ENCODE measurements at regions of chr17 and their contacts with region 1.

Region 1: GRCh38 chr17:59964482-59965328 is at the start of gene RNFT1:
- DNase-seq: peak; percentile 86
- H3K4me3 Mint-ChIP-seq: peak within 1 kb of the TSS; percentile 84
- H3K27ac Mint-ChIP-seq: peak within 1 kb of the TSS; percentile 94
- H3K4me1 Mint-ChIP-seq: peaks cover 25% of the 10 kb centered on the region
- H3K27me3 Mint-ChIP-seq: peaks cover 12% of the 10 kb centered on the region
- total RNA-seq, gene RNFT1: 32.2 and 35.5 TPM in 2 replicates

Region 2: DNA sequence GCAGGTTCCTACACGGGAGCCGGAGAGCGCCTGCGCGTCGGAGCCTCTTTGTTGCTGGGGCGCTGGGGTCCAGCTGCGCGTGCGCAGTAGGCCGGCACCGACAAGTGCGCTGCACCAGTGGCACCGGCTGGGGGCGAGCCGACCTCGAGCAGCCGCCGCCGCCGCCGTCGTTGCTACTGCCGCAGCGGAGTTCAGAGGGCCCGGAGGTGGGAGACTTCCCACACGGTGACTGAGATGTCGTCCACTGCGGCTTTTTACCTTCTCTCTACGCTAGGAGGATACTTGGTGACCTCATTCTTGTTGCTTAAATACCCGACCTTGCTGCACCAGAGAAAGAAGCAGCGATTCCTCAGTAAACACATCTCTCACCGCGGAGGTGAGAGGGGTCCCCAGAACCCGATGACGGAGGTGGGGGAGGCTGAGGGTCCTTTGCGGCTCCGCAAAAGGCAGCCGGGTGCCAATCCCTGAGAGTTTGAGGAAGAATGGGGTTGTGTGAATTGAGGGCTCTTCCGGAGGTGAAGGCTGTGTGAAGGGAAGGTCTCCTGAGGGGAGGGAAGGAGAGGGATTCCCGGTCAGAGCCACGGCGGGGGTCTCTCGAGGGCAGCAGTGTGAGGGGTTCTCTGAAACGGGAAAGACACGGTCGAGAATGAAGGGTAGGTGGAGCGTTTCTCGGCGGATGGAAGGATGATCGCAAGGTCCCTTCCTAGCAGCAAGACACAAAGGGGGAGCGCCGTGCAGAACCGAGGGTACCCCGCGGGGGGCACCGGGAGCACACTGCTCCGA is 744.1 kb before region 1 on chr17 and contains the start of gene GDPD1:
- intact Hi-C with region 1: loop called (anchors 10 kb)
- DNase-seq: peak; percentile 97
- H3K4me3 Mint-ChIP-seq: peak within 1 kb of the TSS; percentile 95
- H3K27ac Mint-ChIP-seq: peak within 1 kb of the TSS; percentile 93
- H3K4me1 Mint-ChIP-seq: peaks cover 14% of the 10 kb centered on the region
- H3K27me3 Mint-ChIP-seq: peaks cover 6% of the 10 kb centered on the region
- total RNA-seq, gene GDPD1: 2.7 and 3.2 TPM in 2 replicates

Region 3: DNA sequence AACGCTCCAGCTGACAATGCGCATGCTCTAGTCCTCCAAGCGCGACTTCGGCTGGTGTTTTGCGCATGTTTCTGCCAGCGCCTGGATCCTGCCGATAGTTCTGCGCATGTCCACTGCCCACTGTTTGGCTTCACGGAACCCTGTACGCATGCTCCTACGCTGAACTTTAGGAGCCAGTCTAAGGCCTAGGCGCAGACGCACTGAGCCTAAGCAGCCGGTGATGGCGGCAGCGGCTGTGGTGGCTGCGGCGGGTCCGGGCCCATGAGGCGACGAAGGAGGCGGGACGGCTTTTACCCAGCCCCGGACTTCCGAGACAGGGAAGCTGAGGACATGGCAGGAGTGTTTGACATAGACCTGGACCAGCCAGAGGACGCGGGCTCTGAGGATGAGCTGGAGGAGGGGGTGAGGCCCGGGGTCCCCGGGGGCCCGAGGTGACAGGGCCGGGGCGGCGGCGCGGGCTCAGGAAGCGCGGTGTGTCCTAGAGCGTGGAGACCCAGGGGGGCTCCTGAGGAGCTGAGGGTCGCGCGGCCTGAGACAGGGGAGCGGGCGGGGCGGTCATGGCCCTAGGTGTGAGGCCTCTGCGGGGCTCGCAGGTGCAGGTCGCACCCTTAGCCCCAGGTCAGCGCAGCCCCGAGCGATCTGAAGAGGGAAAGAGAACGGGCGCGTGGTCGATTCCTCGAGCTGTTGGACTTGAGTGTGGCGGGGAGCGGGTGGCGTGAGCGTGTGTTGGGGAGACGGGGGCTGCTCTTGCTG is 71.6 kb before region 1 on chr17 and contains the starts of genes RPS6KB1 and TUBD1:
- intact Hi-C with region 1: loop called (anchors 1 kb)
- DNase-seq: peak; percentile 98
- H3K4me3 Mint-ChIP-seq: peak within 1 kb of the TSS; percentile 100
- H3K27ac Mint-ChIP-seq: peak within 1 kb of the TSS; percentile 99
- H3K4me1 Mint-ChIP-seq: peaks cover 58% of the 10 kb centered on the region
- H3K27me3 Mint-ChIP-seq: peaks cover 3% of the 10 kb centered on the region
- total RNA-seq, gene RPS6KB1: 67.6 and 82.7 TPM in 2 replicates
- total RNA-seq, gene TUBD1: 12.3 and 13.2 TPM in 2 replicates

Region 4: DNA sequence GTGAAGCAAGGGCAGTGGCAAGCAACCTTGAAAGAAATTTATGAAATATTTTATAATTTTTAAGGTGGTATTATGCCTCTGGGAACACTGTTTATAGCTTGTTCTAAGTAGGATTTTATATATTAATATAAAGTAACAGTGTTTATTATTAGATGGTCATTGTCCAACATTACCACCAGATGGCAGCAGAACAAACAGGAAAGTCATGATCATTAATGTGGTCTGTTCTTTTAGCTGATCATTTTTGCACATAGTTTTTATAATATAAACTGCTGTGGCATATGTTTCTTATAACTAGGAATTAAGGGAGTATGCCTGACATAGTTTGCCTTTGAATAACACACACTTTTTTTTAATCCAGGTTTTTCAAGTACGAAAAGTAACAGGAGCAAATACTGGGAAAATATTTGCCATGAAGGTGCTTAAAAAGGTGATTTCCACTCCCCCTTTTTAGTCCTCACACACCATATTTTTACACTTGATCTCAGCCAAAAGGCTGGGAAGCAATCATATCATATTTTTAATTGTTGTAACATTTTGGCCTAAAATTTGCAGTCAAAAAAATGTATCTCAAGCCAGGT is 50.3 kb before region 1 on chr17:
- intact Hi-C with region 1: loop called (anchors 5 kb)
- DNase-seq: no peak
- H3K4me3 Mint-ChIP-seq: no peak overlapping the region
- H3K27ac Mint-ChIP-seq: no peak overlapping the region
- H3K4me1 Mint-ChIP-seq: peaks cover 6% of the 10 kb centered on the region
- H3K27me3 Mint-ChIP-seq: no peaks in the 10 kb centered on the region

Region 5: DNA sequence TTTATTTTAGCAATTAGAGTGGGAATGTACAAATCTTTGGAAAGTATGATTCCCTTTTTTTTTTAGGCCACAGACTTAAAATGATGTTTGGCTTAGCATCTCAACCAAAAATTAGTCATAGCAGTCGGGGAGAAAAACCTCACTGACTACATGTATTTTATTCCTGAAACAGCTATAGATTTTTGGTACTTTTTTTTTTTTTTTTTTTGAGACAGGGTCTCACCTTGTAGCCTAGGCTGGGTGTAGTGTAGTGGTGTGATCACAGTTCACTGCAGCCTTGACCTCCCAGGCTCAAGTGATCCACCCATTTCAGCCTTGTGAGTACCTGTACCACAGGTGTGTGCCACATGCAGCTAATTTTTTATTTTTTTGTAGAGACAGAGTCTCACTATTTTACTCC is 23.6 kb before region 1 on chr17:
- intact Hi-C with region 1: loop called (anchors 1 kb)
- DNase-seq: no peak
- H3K4me3 Mint-ChIP-seq: no peak overlapping the region
- H3K27ac Mint-ChIP-seq: peak overlapping the region; percentile 84
- H3K4me1 Mint-ChIP-seq: peaks cover 54% of the 10 kb centered on the region
- H3K27me3 Mint-ChIP-seq: no peaks in the 10 kb centered on the region

Region 6: DNA sequence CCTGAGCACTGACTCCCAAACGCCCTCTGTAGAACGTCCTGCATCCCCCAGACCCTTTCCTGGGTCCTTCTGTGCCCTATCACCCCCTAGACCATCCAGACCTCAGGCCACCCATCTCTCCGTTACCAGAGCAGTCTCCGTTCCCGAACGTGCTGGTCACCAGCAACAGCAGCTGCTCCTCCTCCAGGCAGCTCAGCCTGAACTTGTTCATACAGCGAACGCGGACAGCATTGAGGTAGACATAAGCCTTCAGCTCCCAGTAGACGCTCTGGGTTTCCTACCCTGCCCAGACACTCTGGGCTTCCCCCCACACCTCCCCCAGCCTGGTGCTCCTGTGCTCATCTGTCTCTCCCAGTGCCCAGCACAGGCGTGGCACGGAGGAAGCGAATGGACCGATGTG is 41.4 kb after region 1 on chr17:
- intact Hi-C with region 1: no loop called
- DNase-seq: no peak
- H3K4me3 Mint-ChIP-seq: no peak overlapping the region
- H3K27ac Mint-ChIP-seq: no peak overlapping the region
- H3K4me1 Mint-ChIP-seq: no peaks in the 10 kb centered on the region
- H3K27me3 Mint-ChIP-seq: peaks cover 2% of the 10 kb centered on the region

Region 7: DNA sequence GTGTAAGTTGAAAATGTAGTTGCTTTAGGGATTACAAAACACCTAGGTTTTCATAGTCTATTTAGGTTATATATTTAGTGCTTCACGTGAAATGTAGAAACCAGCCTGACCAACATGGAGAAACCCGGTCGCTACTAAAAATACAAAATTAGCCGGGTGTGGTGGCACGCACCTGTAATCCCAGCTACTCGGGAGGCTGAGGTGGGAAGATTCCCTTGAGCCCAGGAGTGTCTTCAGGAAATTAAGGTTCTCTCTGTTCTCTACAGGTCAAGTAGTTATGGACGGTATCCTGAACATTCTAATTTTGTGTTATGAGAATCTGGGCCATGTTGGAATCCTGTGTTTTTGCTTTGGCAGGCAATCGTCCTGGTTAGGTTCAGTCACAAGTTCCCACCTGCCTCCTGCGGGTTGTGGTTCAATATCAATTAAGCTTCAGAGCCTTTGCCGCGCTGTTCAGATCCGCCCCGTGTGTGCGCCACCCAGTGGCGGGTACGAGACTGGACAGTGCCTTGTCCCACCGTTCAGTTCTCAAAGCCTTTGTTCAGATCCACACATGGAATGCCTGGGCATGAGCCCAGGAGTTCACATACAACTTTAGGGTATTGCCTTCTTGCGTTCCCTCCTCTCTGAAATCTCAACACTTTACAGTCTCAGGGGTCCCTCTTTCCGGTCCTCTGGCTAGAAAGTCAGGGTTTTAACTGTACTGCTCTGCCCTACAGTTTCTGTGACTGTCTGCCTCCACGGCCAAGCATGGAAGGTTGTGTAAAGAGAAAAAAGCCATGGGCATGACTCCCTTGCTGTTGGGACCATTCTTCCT is 72.3 kb after region 1 on chr17:
- intact Hi-C with region 1: loop called (anchors 5 kb)
- DNase-seq: peak; percentile 53
- H3K4me3 Mint-ChIP-seq: peak overlapping the region; percentile 25
- H3K27ac Mint-ChIP-seq: no peak overlapping the region
- H3K4me1 Mint-ChIP-seq: peaks cover 6% of the 10 kb centered on the region
- H3K27me3 Mint-ChIP-seq: peaks cover 15% of the 10 kb centered on the region

Region 8: DNA sequence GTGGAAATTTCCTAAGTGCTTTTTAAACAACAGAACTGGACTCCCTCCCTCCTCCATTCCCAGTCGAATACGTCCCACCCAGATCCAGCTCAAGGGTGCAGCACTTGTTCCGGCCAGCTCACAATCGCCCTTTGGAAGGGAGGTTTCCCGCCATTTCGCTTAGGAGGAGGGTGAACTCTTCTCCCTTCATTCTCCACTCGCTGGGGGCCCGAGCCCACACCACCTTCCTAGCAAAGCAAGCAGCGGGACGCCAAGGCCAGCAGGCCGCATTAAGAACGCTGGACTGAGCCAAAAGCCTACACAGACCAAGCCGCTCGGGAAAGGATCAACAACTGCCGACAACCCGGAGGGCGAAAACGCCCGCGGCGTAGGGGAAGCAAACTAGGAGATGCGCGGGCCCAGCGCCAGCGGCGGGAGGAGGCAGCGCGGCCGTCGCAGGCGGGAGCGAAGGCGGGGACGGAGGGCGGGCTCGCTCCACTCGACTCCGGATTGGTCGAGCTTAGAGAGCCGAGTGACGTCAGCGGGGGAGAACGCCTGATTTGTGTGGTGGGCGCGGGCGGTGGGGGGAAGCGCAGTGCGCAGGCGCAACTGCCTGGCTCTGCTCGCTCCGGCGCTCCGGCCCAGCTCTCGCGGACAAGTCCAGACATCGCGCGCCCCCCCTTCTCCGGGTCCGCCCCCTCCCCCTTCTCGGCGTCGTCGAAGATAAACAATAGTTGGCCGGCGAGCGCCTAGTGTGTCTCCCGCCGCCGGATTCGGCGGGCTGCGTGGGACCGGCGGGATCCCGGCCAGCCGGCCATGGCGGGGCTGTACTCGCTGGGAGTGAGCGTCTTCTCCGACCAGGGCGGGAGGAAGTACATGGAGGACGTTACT is 635.1 kb after region 1 on chr17 and contains the start of gene PPM1D:
- intact Hi-C with region 1: loop called (anchors 5 kb)
- DNase-seq: peak; percentile 97
- H3K4me3 Mint-ChIP-seq: peak within 1 kb of the TSS; percentile 95
- H3K27ac Mint-ChIP-seq: peak within 1 kb of the TSS; percentile 95
- H3K4me1 Mint-ChIP-seq: peaks cover 44% of the 10 kb centered on the region
- H3K27me3 Mint-ChIP-seq: no peaks in the 10 kb centered on the region
- total RNA-seq, gene PPM1D: 18.6 and 19.7 TPM in 2 replicates

Measured in activated T-helper 1 cell treated with anti-CD3 and anti-CD28 coated beads, Interleukin-12 subunit alpha, Interleukin-12 subunit beta, Interleukin-2, Interleukin-4 antibody, amounts not matched to agents 30 ng/mL and 10 ng/mL and 1 ng/mL, durations not matched to agents 14 hours and 24 hours and 36 hours (primary cell).